Colonic mucosa (tissue), 4 donors: ENCODE measurements at regions of chr10 and their contacts with region 1.

Region 1: DNA sequence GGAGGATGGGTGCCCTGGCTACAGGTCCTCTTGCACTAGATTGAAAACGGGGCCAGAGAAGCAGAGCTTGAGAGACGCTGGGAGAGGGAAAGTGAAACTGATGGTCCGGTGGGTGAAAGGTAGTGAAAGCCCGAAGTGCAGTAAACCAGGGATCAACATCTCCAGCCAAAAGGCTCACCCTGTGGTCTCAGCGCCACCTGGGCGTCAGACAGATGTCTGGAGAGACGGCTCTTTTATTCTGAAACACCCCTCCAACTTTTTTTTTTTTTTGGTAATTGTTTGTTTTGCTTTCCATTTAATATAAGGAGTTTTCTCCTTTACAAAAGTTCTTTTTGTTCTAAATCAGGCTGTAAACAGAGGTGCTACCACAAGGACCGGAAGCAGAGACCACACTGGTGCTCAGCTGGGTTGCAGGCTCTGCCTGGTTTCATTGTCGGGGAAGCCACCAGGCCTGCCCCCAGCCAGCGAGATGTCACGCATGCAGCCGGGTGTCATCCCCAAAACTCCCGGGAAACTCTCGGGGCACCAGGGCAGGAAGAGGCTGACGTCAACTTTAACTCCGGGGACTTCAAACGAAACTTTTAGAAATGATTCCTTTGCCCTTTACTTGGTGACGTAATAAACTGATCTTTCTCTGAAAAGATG is 11.2 kb downstream of the IL2RA start:
- DNase-seq: peak; percentile 80
- H3K4me3 ChIP-seq: peak overlapping the region; percentile 23
- H3K27ac ChIP-seq: peak overlapping the region; percentile 48
- H3K4me1 ChIP-seq: no peaks in the 10 kb centered on the region
- H3K27me3 ChIP-seq: no peaks in the 10 kb centered on the region
- CTCF ChIP-seq: peak; percentile 32

Region 2: GRCh38 chr10:6014241-6014761 is 36.6 kb before region 1 on chr10:
- intact Hi-C with region 1: loop called (anchors 5 kb)
- DNase-seq: peak; percentile 77
- H3K4me3 ChIP-seq: no peak overlapping the region
- H3K27ac ChIP-seq: no peak overlapping the region
- H3K4me1 ChIP-seq: peaks cover 4% of the 10 kb centered on the region
- H3K27me3 ChIP-seq: no peaks in the 10 kb centered on the region
- CTCF ChIP-seq: peak; percentile 79